ENCODE measurements at regions of chr21 and their contacts with region 1.

Region 1: GRCh38 chr21:37452227-37452626 is 85.7 kb downstream of the DYRK1A start:
- DNase-seq: peak; percentile 94
- ATAC-seq: peak; percentile 81
- H3K4me3 ChIP-seq: no peak overlapping the region
- H3K27ac ChIP-seq: no peak overlapping the region
- H3K4me1 ChIP-seq: peaks cover 15% of the 10 kb centered on the region
- H3K27me3 ChIP-seq: no peaks in the 10 kb centered on the region
- CTCF ChIP-seq: no peak
- POLR2A ChIP-seq: no peak
- RAD21 ChIP-seq: no peak; the same call in 1 of the 2 replicates

Region 2: DNA sequence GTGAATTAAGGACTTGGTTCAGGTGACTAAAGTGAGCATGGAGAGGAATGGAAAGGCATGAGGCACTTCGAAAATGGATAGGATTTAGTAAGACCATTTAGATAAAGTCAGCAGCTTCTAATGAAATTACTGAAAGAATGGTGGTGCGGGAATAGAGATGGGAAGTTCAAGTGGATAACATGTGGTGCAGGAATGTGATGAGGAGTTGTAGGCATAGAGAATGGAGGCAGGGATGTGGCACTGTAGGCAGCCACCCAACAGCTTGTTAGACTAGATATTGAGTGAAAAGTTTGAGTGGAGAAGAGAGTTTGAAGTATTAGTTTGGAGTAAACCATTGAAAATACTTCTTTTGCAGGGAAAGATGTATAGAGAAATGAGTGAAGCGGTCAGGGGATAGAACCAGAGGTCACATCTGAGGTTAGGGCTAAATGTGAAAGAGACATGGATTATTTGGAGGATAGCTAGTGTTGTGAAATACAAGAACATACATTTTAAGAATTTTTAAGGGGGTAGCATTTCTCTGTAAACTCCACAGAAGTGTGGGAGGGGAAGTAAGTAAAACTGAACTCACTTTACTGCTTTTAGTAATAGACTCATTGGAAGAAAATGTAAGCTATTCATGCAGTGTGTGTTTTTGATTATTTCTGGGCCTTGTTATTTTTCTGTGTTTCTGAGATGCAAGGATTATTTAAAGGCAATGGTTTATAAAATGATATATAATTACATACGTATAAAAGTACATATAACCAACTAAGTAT is 39.4 kb before region 1 on chr21:
- CTCF ChIA-PET with region 1: no interaction called
- POLR2A ChIA-PET with region 1: no interaction called
- dilution Hi-C with region 1: no loop called
- in situ Hi-C with region 1: no loop called
- intact Hi-C with region 1: loop called (anchors 5 kb)
- DNase-seq: peak; percentile 75
- ATAC-seq: peak; percentile 85
- H3K4me3 ChIP-seq: no peak overlapping the region
- H3K27ac ChIP-seq: peak overlapping the region; percentile 68; the same call in 1 of the 2 replicates
- H3K4me1 ChIP-seq: peaks cover 22% of the 10 kb centered on the region
- H3K27me3 ChIP-seq: no peaks in the 10 kb centered on the region
- CTCF ChIP-seq: no peak
- POLR2A ChIP-seq: no peak
- RAD21 ChIP-seq: no peak

Region 3: DNA sequence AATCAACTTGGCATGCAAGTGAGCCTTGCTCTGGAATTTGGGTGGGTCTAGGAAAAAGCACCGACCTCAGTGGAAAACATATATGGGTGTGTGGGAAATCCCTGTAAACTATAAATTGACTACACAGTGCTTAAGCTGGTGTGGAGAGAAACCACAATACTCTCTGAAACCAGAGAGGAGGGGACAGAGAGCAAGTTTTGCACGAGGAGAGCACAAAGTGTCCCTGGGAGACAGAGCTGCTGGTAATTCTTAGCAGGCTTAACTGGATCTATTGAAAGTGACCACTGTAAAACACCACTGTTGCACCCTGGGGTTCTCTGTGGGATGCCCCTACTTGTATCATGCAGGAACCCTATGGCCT is 817.3 kb after region 1 on chr21:
- CTCF ChIA-PET with region 1: no interaction called
- POLR2A ChIA-PET with region 1: no interaction called
- dilution Hi-C with region 1: no loop called
- in situ Hi-C with region 1: no loop called
- intact Hi-C with region 1: loop called (anchors 10 kb)
- DNase-seq: no peak
- ATAC-seq: no peak
- H3K4me3 ChIP-seq: no peak overlapping the region
- H3K27ac ChIP-seq: no peak overlapping the region
- H3K4me1 ChIP-seq: peaks cover 25% of the 10 kb centered on the region
- H3K27me3 ChIP-seq: no peaks in the 10 kb centered on the region
- CTCF ChIP-seq: no peak
- POLR2A ChIP-seq: no peak
- RAD21 ChIP-seq: no peak